Activated CD8-positive, alpha-beta T cell treated with anti-CD3 and anti-CD28 coated beads for 36 hours (primary cell): ENCODE measurements at regions of chr4 and their contacts with region 1.

Region 1: DNA sequence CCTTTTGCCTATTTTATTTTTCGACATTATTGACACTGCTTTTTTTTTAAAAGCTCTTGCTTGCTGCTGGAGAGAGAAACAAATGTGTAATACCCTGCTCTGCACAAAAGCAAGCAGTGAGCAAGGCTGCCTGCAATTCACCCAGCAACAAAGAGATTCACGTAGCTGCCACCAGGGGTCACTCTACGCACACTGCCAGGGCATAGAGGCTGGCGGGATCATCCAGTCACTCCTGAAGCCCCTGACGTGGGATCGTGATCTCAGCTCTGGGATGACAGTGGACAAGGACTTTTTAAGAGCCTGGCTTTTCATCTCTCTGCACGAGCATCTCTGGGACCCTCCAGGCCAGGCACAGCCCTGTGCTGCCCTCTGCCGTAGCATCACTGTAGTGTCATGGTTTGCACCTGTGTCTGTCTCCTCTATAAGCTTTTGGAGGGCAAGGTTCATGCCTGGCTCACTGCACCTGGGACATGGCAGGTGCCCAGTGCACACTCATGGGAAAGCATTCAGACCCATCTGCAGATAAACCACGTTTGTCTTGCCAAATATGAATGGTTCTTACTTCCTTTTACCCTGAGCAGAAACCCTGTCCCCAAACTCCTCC is 19.8 kb downstream of the C4orf50 start:
- DNase-seq: peak; percentile 62
- ATAC-seq: peak; percentile 65
- H3K4me3 Mint-ChIP-seq: no peak overlapping the region
- H3K27ac Mint-ChIP-seq: no peak overlapping the region
- H3K4me1 Mint-ChIP-seq: peaks cover 7% of the 10 kb centered on the region
- H3K27me3 Mint-ChIP-seq: peaks cover 2% of the 10 kb centered on the region
- CTCF ChIP-seq: peak; percentile 94

Region 2: GRCh38 chr4:5988086-5988845 is 10.2 kb before region 1 on chr4:
- CTCF ChIA-PET with region 1: interaction called, 11 read pairs
- POLR2A ChIA-PET with region 1: interaction called, 3 read pairs
- intact Hi-C with region 1: no loop called
- DNase-seq: no peak
- ATAC-seq: no peak
- H3K4me3 Mint-ChIP-seq: no peak overlapping the region
- H3K27ac Mint-ChIP-seq: no peak overlapping the region
- H3K4me1 Mint-ChIP-seq: no peaks in the 10 kb centered on the region
- H3K27me3 Mint-ChIP-seq: peaks cover 2% of the 10 kb centered on the region
- CTCF ChIP-seq: no peak